Natural killer cell (primary cell): ENCODE measurements at regions of chr16 and their contacts with region 1.

Region 1: GRCh38 chr16:72832621-72833248 is 215.2 kb downstream of the ZFHX3 start:
- DNase-seq: peak; percentile 70 to 72
- ATAC-seq: peak; percentile 83 to 97 (median 85)
- H3K4me3 ChIP-seq: no peak overlapping the region
- H3K4me3 Mint-ChIP-seq: no peak overlapping the region
- H3K27ac ChIP-seq: no peak overlapping the region
- H3K27ac Mint-ChIP-seq: no peak overlapping the region
- H3K4me1 ChIP-seq: no peaks in the 10 kb centered on the region
- H3K4me1 Mint-ChIP-seq: peaks cover 7% of the 10 kb centered on the region in 2 donors
- H3K27me3 ChIP-seq: no peaks in the 10 kb centered on the region
- H3K27me3 Mint-ChIP-seq: no peaks in the 10 kb centered on the region
- CTCF ChIP-seq: peak; percentile 99

Region 2: GRCh38 chr16:73956587-73957494 is 1124.1 kb after region 1 on chr16:
- intact Hi-C with region 1: loop called (anchors 2 kb)
- DNase-seq: peak in 1 of 2 donors; percentile 54
- ATAC-seq: peak in 1 of 3 donors; percentile 36
- H3K4me3 ChIP-seq: no peak overlapping the region
- H3K4me3 Mint-ChIP-seq: no peak overlapping the region
- H3K27ac ChIP-seq: no peak overlapping the region
- H3K27ac Mint-ChIP-seq: no peak overlapping the region
- H3K4me1 ChIP-seq: no peaks in the 10 kb centered on the region
- H3K4me1 Mint-ChIP-seq: no peaks in the 10 kb centered on the region
- H3K27me3 ChIP-seq: no peaks in the 10 kb centered on the region
- H3K27me3 Mint-ChIP-seq: peaks cover 0 to 6% of the 10 kb centered on the region in 2 donors
- CTCF ChIP-seq: peak; percentile 40

Region 3: GRCh38 chr16:74320707-74321106 is 1488.0 kb after region 1 on chr16:
- intact Hi-C with region 1: loop called (anchors 10 kb)
- DNase-seq: no peak
- ATAC-seq: no peak
- H3K4me3 ChIP-seq: no peak overlapping the region
- H3K4me3 Mint-ChIP-seq: no peak overlapping the region
- H3K27ac ChIP-seq: no peak overlapping the region
- H3K27ac Mint-ChIP-seq: no peak overlapping the region
- H3K4me1 ChIP-seq: no peaks in the 10 kb centered on the region
- H3K4me1 Mint-ChIP-seq: no peaks in the 10 kb centered on the region
- H3K27me3 ChIP-seq: no peaks in the 10 kb centered on the region
- H3K27me3 Mint-ChIP-seq: no peaks in the 10 kb centered on the region
- CTCF ChIP-seq: no peak